ENCODE measurements at regions of chrX and their contacts with region 1.

Region 1: GRCh38 chrX:68807818-68808217 is 21.0 kb upstream of the EFNB1 start:
- DNase-seq: no peak
- H3K4me3 ChIP-seq: no peak overlapping the region
- H3K27ac ChIP-seq: no peak overlapping the region
- H3K27me3 ChIP-seq: no peaks in the 10 kb centered on the region
- CTCF ChIP-seq: peak; percentile 30

Region 2: GRCh38 chrX:68511255-68511654 is 296.6 kb before region 1 on chrX:
- CTCF ChIA-PET with region 1: interaction called, 11 read pairs
- POLR2A ChIA-PET with region 1: no interaction called
- DNase-seq: no peak
- H3K4me3 ChIP-seq: no peak overlapping the region
- H3K27ac ChIP-seq: no peak overlapping the region
- H3K27me3 ChIP-seq: no peaks in the 10 kb centered on the region
- CTCF ChIP-seq: peak; percentile 80

Region 3: DNA sequence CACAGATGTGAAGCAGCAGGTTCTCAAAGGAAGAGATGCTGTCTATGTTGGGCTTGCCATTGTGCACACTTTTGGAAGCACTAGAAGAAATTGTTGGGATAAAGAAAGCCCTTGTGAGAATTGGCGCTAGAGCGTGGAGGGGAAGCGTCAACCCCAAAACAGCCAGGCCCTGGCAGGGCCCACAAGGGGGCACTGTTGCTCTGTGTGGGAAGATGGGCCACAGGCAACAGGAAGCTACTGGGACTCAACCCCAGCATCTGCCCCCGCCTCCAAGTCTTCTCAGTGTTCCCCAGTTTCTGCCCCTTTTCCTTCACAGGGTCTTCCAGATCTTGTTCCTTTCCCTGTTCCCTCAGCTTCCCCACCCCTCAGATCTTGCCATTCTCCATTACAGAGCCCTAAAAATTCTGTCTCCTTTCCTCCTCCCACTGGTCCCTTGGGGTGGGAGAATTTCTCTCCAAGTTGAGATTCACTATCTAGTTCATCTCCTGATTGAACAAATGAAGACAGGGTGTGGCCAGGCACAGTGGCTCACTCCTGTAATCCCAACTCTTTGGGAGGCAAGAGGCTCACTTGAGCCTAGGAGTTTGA is 74.8 kb before region 1 on chrX:
- CTCF ChIA-PET with region 1: interaction called, 21 read pairs
- POLR2A ChIA-PET with region 1: no interaction called
- DNase-seq: no peak
- H3K4me3 ChIP-seq: no peak overlapping the region
- H3K27ac ChIP-seq: no peak overlapping the region
- H3K27me3 ChIP-seq: no peaks in the 10 kb centered on the region
- CTCF ChIP-seq: peak; percentile 69

Measured in AG04450 (cell line).